ENCODE measurements at regions of chr19 and their contacts with region 1.

Region 1: DNA sequence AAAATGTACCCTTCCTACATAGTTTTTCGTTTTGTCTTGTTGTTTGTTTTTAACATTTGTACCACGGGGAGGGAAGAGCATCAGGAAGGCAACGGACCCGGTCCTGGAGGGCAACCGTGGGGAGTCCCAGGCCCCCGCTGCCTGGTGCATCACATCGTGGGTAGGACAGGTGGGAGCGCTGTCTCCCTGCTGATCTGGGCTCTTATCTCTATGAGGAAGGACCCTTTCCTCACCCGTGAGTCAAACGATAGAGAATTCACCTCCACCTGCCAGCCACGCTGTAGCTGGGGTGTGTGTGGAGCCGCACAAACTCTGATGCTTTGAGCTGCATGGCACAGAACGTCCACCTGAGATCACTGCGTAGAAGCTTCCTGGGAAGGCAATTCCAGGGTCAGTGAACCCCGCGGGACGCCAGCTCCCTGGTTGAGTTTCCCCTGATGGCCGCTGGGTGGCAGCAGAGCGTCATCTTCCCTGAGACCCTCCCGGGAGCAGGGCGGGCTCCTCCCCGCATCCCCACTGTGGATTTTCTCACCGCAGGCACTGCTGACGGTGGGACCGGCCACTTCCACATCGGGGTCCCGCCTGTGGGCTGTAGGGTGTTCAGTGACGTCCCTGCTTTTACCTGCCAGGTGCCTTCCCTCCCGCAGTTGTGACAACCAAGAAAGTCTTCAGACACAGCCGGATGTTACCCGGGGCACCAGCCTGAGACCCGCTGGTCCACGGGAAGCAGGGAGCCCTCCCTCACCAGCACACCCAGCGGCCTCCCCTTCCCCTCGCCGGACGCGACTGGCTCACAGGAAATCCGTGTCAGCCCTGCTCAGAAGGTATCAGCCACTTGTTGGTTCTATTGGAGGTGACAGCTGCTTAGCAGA is 54.7 kb downstream of the ZNF787 start:
- DNase-seq: peak; percentile 67

Region 2: GRCh38 chr19:56015756-56016155 is 50.6 kb before region 1 on chr19:
- in situ Hi-C with region 1: no loop called
- DNase-seq: no peak

Region 3: DNA sequence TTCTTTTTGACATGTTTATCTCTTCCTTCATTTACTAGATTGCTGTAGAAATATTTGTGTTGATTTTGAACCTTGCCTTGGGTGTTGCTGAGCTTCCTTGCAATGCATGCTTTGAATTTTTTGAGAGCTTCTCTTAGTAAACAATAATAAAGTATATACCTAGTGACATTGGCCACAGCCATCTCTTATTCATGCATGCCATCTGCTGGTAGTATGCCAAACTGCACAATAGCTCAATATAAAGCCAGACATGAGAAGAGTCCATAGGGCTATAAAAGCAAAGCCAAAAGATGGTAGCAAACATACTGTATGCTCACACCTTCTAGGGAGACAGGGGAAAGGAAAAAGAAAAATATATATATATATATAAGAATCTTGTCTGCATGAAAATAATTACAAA is 267.1 kb after region 1 on chr19:
- in situ Hi-C with region 1: loop called (anchors 25 kb)
- DNase-seq: peak; percentile 11

Measured in G401 (cell line).